PC-3 (cell line): ENCODE measurements at regions of chr12 and their contacts with region 1.

Region 1: GRCh38 chr12:122471324-122472226 is 29.2 kb downstream of the ZCCHC8 start:
- DNase-seq: peak; percentile 85
- ATAC-seq: peak; percentile 83
- H3K4me3 ChIP-seq: no peak overlapping the region
- H3K27ac ChIP-seq: no peak overlapping the region
- H3K4me1 ChIP-seq: peaks cover 5% of the 10 kb centered on the region
- H3K27me3 ChIP-seq: no peaks in the 10 kb centered on the region
- CTCF ChIP-seq: peak; percentile 94

Region 2: DNA sequence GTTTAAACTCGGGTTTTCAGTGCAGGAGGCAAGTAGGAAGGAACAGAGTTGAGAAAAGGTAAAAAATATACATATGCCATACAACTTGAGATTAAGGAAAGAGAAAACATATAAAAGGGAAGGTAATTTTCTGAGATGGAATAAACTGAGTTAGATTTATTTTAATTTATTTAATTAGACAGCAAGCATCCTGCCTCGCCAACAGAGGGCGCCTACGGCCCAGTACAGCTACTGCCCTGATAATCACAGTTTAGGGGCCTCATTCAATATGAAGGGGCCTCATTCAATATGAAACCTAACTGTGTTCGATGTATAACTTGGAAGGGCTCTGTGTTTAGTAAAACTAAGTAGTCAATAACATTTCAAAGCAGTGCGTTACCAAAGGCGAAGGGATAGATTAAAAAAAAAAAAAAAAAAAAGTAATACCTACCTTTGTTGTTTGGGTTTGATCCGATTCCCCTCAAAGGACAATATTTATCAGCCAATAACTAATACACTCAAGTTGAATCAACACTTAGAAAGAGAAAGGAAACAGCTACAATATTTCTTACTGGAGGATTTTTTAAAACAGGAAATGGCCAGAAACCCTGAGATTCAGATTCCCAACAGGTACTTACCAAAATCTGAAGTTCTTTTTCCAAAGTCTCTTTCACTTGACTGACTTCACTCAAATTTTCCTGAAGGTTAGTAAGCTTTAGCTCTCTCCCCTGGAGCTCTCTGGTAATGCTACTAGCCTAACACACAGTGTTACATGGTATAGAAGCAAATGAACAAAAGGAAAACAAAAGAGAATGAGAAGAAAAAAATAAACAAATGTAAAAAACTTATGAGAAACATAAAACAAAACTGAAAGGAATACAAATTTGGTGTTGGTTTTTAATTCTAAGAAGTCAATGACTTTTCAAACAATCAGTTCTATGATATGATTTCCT is 135.3 kb before region 1 on chr12:
- CTCF ChIA-PET with region 1: no interaction called
- POLR2A ChIA-PET with region 1: no interaction called
- intact Hi-C with region 1: loop called (anchors 1 kb)
- DNase-seq: peak; percentile 36
- ATAC-seq: peak; percentile 62
- H3K4me3 ChIP-seq: no peak overlapping the region
- H3K27ac ChIP-seq: no peak overlapping the region
- H3K4me1 ChIP-seq: no peaks in the 10 kb centered on the region
- H3K27me3 ChIP-seq: no peaks in the 10 kb centered on the region
- CTCF ChIP-seq: peak; percentile 95

Region 3: DNA sequence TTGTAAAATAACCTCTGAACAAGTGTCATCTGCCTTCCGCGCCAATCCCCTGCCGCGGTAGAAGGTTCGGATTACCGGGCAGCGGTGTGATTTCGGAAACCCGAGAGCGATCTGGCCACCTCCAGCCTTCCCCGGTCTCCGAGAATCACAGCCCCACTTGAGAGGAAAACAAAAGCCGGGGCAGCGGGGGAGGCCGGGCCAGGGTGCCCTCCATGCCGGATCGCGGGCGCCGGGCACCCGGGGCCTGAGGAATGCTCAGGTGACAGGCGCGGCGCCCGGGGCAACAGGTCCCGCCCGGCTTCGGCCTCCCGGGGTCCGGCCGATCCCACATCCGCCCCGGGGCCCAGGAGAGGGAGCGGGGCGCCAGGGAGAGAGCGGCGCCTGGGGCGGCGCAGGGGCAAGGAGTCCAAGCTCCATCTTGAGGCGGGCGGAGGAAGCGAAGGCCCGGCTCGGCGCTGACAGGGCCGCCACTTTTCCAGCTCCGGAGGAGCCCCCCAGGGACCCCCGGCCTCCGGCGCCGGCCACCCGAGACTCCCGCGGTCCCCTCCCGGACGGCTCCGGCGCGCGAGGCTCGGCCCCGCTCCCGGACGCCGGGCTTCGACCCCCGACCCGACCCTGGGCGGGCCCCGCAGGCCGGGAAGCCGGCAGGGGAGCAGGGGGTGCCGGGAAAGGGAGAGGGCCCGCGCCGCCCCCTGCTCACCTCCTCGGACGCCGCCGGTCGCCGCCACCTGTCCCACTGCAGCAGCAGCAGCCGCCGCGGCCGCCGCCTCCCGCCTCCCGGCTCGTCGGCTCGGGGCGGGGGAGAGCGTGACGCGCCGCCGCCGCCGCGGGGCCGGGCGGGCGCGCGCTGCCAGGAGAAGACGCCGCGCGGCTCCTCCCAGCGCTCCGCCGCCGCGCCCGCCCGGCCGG is 49.5 kb before region 1 on chr12 and contains the start of gene CLIP1:
- CTCF ChIA-PET with region 1: interaction called, 3 read pairs
- POLR2A ChIA-PET with region 1: interaction called, 3 read pairs
- intact Hi-C with region 1: loop called (anchors 1 kb)
- DNase-seq: peak; percentile 74
- ATAC-seq: peak; percentile 73
- H3K4me3 ChIP-seq: peak within 1 kb of the TSS; percentile 86
- H3K27ac ChIP-seq: peak within 1 kb of the TSS; percentile 86
- H3K4me1 ChIP-seq: peaks cover 40% of the 10 kb centered on the region
- H3K27me3 ChIP-seq: no peaks in the 10 kb centered on the region
- CTCF ChIP-seq: peak; percentile 55
- total RNA-seq, gene CLIP1: 46.4 and 57.9 TPM in 2 replicates

Region 4: GRCh38 chr12:122449353-122449752 is 22.2 kb before region 1 on chr12:
- CTCF ChIA-PET with region 1: no interaction called
- POLR2A ChIA-PET with region 1: interaction called, 3 read pairs
- intact Hi-C with region 1: loop called (anchors 1 kb)
- DNase-seq: peak; percentile 99
- ATAC-seq: peak; percentile 98
- H3K4me3 ChIP-seq: no peak overlapping the region
- H3K27ac ChIP-seq: peak overlapping the region; percentile 67
- H3K4me1 ChIP-seq: peaks cover 17% of the 10 kb centered on the region
- H3K27me3 ChIP-seq: no peaks in the 10 kb centered on the region
- CTCF ChIP-seq: no peak